ENCODE measurements at regions of chr10 and their contacts with region 1.

Region 1: DNA sequence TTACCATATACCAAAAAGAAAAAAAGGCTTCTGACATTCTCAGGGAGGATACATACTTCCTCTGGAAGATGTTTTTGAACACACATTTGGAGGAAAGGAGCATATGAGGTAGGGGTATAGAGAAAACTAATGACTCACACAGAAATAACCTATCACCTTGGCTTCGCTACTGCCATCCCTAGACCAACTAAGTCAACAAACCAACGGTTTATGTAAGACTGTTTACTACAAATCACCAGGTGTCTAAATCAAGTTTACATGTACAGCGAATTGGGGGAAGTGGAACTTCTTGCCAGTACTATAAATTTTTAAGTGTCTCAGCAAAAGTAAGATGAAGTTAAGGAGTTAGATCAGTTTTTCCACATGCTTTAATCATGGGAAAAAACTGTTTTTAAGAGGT is 96.9 kb downstream of the NT5C2 start:
- DNase-seq: no peak
- H3K4me3 ChIP-seq: no peak overlapping the region
- H3K27ac ChIP-seq: no peak overlapping the region
- H3K4me1 ChIP-seq: no peaks in the 10 kb centered on the region
- H3K27me3 ChIP-seq: no peaks in the 10 kb centered on the region
- CTCF ChIP-seq: no peak
- EP300 ChIP-seq: no peak
- POLR2A ChIP-seq: no peak
- RAD21 ChIP-seq: no peak

Region 2: DNA sequence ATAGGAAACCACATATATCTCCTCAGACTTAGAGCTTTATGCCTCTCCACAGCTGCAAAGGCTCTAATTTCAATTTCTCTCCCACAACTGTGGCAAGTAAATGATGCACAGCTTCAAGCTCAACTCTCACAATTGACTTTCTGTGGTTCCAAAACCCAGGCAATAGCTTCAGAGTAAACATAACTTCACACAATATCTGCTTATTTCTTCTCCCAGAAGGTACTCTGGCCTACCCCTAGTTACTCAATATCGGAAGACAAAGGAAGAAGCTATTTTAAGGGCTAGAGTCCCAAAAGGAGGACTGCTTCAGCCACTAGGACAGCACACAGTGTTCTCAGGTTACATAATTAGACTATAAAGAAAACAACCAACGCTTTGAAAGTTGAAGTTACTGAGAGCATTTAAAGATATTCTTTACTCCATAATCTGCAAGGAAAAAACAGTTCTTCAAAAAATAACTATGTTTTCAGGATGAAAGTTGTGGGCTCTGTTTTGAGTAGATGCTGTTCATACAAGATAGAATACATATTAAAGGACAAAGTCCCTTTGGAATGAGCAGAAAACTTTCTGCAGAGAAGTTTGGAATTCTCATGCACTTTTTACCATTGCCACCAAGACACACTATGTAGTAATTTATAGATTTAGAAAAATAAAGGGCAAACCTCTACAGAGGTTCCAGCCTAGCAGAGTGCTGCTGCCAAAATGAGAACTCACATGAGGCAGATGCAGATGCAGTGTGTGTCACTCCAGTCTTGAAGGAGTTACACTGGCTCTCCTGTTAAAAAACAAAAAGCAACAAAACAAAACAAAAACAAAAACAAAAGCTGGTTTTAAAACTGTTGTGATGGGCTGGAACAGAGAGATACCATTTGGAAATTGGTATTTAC is 15.1 kb after region 1 on chr10:
- CTCF ChIA-PET with region 1: interaction called, 10 read pairs
- POLR2A ChIA-PET with region 1: interaction called, 6 read pairs
- DNase-seq: no peak
- H3K4me3 ChIP-seq: no peak overlapping the region
- H3K27ac ChIP-seq: no peak overlapping the region
- H3K4me1 ChIP-seq: peaks cover 0 to 5% (median 0%) of the 10 kb centered on the region in 4 experiments; a peak in 1 of 7 replicates
- H3K27me3 ChIP-seq: no peaks in the 10 kb centered on the region
- CTCF ChIP-seq: no peak
- EP300 ChIP-seq: no peak
- POLR2A ChIP-seq: no peak
- RAD21 ChIP-seq: no peak

Measured in H1 (cell line).